AG04450 (cell line): ENCODE measurements at regions of chr1 and their contacts with region 1.

Region 1: DNA sequence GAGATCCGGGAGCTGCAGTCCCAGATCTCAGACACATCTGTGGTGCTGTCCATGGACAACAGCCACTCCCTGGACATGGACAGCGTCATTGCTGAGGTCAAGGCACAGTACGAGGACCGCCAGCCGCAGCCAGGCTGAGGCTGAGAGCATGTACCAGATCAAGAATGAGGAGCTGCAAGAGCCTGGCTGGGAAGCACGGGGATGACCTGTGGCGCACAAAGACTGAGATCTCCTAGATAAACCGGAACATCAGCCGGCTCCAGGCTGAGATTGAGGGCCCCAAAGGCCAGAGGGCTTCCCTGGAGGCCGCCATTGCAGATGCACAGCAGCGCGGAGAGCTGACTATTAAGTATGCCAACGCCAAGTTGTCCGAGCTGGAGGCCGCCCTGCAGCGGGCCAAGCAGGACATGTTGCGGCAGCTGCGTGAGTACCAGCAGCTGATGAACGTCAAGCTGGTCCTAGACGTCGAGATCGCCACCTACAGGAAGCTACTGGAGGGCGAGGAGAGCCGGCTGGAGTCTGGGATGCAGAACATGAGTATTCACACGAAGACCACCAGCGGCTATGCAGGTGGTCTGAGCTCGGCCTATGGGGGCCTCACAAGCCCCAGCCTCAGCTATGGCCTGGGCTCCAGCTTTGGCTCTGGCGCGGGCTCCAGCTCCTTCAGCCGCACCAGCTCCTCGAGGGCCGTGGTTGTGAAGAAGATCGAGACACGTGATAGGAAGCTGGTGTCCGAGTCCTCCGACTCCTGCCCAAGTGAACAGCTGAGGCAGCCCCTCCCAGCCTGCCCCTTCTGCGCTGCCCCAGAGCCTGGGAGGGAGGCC is 25.5 kb downstream of the ETV3L start:
- DNase-seq: peak; percentile 32
- H3K4me3 ChIP-seq: no peak overlapping the region
- H3K27ac ChIP-seq: no peak overlapping the region
- H3K27me3 ChIP-seq: peaks cover 15% of the 10 kb centered on the region
- CTCF ChIP-seq: peak; percentile 71

Region 2: DNA sequence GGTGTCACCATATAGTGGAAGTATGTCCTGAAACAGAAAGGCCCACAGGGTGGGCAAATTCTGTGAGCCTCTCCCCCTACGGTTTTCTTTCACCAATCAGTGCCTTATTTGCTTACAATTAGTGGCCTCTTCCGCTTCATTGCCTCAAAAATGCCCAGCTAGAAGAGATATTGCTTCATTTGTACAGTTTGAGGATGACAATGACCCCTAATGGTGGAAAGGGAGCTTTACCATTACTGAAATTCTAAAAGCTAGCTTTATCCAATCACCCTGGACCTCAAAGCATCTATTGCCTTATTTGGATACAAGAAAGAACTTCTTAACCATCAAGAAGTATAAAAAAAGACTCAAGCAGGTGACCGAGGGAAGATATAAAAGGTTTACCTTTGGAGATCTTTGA is 104.1 kb before region 1 on chr1:
- CTCF ChIA-PET with region 1: interaction called, 10 read pairs
- POLR2A ChIA-PET with region 1: no interaction called
- DNase-seq: no peak
- H3K4me3 ChIP-seq: no peak overlapping the region
- H3K27ac ChIP-seq: no peak overlapping the region
- H3K27me3 ChIP-seq: no peaks in the 10 kb centered on the region
- CTCF ChIP-seq: peak; percentile 39

Region 3: DNA sequence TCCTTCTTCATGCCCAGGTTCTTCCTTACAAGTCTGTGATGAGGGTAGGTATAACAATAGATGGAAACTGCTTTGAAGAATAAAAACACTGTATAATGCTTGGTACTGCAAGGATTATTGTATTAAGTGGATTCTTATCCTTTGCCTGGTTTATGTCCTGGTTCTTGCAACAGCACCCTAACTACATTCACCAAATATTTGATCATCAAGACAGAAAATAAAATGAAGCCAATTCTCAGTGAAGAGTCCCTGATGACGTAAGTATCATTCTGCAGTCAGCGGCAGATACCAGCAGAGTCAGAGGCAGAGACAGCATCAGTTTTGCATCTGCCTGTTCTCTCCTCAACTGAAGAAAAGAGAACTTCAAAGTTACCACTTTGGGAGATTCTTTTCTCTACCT is 48.3 kb before region 1 on chr1:
- CTCF ChIA-PET with region 1: interaction called, 11 read pairs
- POLR2A ChIA-PET with region 1: no interaction called
- DNase-seq: no peak
- H3K4me3 ChIP-seq: no peak overlapping the region
- H3K27ac ChIP-seq: no peak overlapping the region
- H3K27me3 ChIP-seq: no peaks in the 10 kb centered on the region
- CTCF ChIP-seq: no peak